ENCODE measurements at regions of chr11 and their contacts with region 1.

Region 1: GRCh38 chr11:67345920-67346799 is 7.2 kb downstream of the POLD4 start:
- DNase-seq: peak in 2 of 3 donors; percentile 49 to 54
- H3K4me3 ChIP-seq: no peak overlapping the region
- H3K27ac ChIP-seq: no peak overlapping the region
- H3K4me1 ChIP-seq: peaks cover 0 to 33% (median 14%) of the 10 kb centered on the region in 4 experiments
- H3K27me3 ChIP-seq: no peaks in the 10 kb centered on the region

Region 2: DNA sequence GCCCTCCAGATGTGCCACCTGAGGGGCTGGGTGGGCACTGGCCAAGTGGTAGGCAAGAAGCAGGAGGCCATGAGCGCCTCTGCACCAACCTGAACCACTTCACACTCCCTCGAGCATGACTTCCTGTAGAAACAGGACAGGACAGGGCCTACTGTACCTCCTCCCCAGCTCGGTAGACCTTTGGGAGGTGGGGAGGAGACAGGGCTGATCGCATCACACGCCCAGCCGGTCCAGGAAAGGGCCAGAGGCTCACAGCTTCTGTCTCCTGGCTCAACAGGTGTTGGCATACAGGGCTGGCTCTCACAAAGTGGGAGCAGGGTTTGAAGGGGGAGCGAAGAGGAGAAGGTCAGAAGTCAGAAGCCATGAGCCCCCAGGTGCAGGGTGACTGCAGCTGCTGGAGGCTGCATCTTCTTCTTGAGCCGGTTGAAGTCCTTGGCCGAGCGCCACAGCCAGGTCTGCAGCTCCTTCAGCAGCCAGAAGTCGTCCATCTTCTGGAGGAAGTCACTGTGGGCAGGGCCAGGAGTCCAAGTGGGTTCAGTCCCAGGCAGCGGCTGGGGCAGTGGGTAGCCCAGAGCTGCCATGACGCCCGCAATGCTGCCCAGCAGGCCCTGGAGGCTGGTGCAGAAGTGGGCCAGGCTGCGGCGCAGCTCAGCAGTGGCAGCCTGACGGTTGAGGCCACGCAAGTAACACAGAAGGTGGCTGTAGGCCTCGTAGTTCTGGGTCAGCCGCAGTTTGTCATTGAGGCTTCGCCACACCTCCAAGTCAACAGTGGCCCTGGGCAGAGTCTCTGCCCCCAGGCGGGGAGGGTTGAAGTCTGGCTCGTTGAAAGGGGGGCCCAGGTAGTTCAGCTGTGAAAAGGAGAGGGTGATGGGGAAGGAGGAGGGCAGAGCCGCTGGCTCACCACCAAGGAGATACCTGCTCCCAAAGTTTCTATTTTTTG is 18.9 kb after region 1 on chr11:
- CTCF ChIA-PET with region 1: interaction called, 892 read pairs
- POLR2A ChIA-PET with region 1: interaction called, 3 read pairs
- DNase-seq: peak in 1 of 3 donors; percentile 38
- H3K4me3 ChIP-seq: peak overlapping the region in 2 of 7 experiments; percentile 4 to 23
- H3K27ac ChIP-seq: no peak overlapping the region
- H3K4me1 ChIP-seq: peaks cover 0 to 65% (median 54%) of the 10 kb centered on the region in 4 experiments
- H3K27me3 ChIP-seq: peaks cover 0 to 4% (median 0%) of the 10 kb centered on the region in 5 experiments

Region 3: GRCh38 chr11:67373925-67374618 is 27.9 kb after region 1 on chr11:
- CTCF ChIA-PET with region 1: interaction called, 892 read pairs
- POLR2A ChIA-PET with region 1: no interaction called
- DNase-seq: peak; percentile 51 to 80 (median 75)
- H3K4me3 ChIP-seq: peak overlapping the region in 6 of 7 experiments; percentile 35 to 70 (median 52)
- H3K27ac ChIP-seq: peak overlapping the region in 1 of 2 experiments; percentile 72
- H3K4me1 ChIP-seq: peaks cover 0 to 63% (median 59%) of the 10 kb centered on the region in 4 experiments
- H3K27me3 ChIP-seq: peaks cover 0 to 18% (median 0%) of the 10 kb centered on the region in 5 experiments

Region 4: DNA sequence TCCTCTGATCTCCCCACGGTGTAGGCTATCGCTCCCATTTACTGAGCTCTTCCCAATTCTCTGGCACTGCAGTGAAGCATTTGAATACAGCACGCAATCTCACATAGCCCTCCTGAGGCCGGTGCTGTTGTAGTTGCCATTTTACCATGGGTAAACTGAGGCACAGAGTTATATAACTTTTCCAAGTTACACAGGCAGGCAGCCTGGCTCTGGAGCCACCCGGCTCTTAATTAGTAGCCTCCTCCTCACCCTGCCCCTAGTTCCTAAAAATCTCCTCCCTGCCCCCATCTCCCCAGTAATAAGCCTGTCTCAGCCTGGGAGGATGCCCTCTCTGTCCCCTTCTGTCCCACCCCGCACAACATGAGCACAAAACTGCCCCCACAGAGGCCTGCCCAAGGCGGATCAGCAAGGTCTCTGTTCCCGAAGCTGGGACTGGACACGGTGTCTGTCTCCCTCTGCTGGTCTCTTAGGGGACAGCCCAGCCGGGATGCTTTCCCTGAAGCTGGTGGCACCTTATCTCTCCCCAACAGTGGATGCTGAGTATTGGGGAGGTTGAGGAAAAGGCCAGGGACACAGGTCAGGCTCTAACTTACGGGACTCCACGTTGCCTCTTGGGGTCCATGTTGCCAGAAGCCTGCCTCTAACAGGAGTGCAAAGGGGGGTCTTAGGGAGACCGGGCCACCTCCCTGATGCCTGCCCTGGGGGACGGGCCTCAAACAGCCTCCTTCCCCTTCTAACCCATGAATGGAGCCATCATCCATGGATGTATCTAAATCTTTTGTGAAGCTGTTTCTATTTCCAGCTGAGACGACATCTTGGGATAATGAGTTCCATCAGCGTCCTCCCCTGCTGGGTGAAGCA is 36.3 kb after region 1 on chr11:
- CTCF ChIA-PET with region 1: interaction called, 892 read pairs
- POLR2A ChIA-PET with region 1: no interaction called
- DNase-seq: peak; percentile 70 to 82 (median 73)
- H3K4me3 ChIP-seq: no peak overlapping the region
- H3K27ac ChIP-seq: no peak overlapping the region
- H3K4me1 ChIP-seq: peaks cover 0 to 46% (median 29%) of the 10 kb centered on the region in 4 experiments
- H3K27me3 ChIP-seq: no peaks in the 10 kb centered on the region

Region 5: GRCh38 chr11:67391304-67392132 is 45.4 kb after region 1 on chr11 and contains the start of gene RAD9A:
- CTCF ChIA-PET with region 1: interaction called, 892 read pairs
- POLR2A ChIA-PET with region 1: no interaction called
- DNase-seq: peak; percentile 93 to 96 (median 95)
- H3K4me3 ChIP-seq: peak within 1 kb of the TSS; percentile 46 to 90 (median 74)
- H3K27ac ChIP-seq: peak within 1 kb of the TSS; percentile 50 to 79
- H3K4me1 ChIP-seq: peaks cover 3 to 47% (median 23%) of the 10 kb centered on the region in 4 experiments
- H3K27me3 ChIP-seq: no peaks in the 10 kb centered on the region

Measured in common myeloid progenitor, CD34-positive (primary cell).